A549 (cell line): ENCODE measurements at regions of chr17 and their contacts with region 1.

Region 1: DNA sequence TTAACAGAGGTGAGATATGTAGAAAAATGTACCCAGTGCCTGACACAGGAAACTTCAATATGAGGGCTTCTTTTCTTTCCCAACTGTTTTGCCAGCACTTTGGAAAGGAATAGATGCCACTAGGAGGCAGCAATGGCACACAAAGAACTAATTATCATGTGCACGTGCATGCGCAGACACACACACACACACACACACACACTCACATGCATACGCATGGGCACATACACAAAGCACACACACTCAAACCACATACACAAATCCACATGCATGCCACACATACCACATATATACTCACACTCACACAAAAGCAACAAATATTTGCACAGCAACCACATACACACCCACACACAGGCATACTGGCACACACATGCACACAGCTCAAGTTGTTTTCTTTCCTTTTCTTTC is 8.8 kb upstream of the CEP112 start:
- DNase-seq: peak; percentile 77 to 89
- ATAC-seq: peak; percentile 75 to 81
- H3K4me3 ChIP-seq: no peak overlapping the region
- H3K27ac ChIP-seq: peak overlapping the region; percentile 8 to 14; a peak in 2 of 6 replicates
- H3K4me1 ChIP-seq: peaks cover 5% of the 10 kb centered on the region
- CTCF ChIP-seq: peak; percentile 98
- EP300 ChIP-seq: no peak
- POLR2A ChIP-seq: no peak
- RAD21 ChIP-seq: peak; percentile 99

Region 2: DNA sequence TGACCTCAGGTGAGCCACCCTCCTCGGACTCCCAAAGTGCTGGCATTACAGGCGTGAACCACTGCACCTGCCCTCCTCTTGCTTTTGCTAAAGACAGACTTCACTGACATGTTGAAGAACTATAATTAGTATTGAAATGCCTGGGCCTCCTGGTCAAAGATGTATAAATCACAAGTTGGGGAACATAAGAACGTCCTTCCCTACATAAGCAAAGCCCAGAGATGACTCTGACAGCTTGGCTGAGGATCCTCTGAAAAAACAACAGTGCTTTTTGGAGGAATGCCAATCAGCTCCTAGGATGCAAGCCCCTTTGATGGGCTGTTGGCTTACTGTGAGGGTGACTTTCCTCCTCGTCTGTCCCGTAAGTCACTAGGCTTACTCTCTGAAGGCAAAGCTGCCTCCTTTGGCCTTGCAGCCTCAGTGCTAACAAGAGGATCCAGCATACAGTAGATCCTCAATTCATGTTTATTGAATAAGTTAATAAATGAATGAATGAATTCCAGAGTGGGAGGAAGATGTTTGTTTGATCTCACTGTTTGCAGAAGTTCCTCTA is 22.2 kb after region 1 on chr17:
- CTCF ChIA-PET with region 1: interaction called, 20 read pairs
- POLR2A ChIA-PET with region 1: no interaction called
- DNase-seq: no peak
- ATAC-seq: peak in 1 of 2 experiments; percentile 40; a peak in 3 of 6 replicates
- H3K4me3 ChIP-seq: no peak overlapping the region
- H3K27ac ChIP-seq: peak overlapping the region; percentile 1 to 54; a peak in 3 of 6 replicates
- H3K4me1 ChIP-seq: peaks cover 16% of the 10 kb centered on the region
- CTCF ChIP-seq: no peak
- EP300 ChIP-seq: no peak
- POLR2A ChIP-seq: no peak
- RAD21 ChIP-seq: no peak

Region 3: DNA sequence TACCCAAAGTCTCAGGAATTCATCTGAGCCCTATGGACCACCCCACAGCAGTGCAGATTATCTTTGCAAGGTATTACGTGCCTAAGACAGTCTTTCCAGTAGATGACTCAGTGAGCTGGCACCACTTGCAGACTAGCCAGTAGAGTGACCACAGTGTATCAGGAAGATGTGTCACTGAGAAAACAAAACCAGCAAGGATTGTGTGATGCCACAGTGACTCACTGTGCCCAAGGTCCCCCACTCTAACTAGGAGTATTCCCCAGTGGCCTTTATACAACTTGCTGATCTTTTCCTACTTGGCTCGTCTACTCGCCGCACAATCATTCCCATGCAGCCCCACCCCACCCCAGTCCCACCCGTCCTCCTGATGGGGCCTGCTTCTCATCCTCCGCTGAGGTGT is 75.0 kb after region 1 on chr17:
- CTCF ChIA-PET with region 1: interaction called, 10 read pairs
- POLR2A ChIA-PET with region 1: no interaction called
- DNase-seq: peak; percentile 97 to 98
- ATAC-seq: peak; percentile 94 to 97
- H3K4me3 ChIP-seq: no peak overlapping the region
- H3K27ac ChIP-seq: peak overlapping the region; percentile 91 to 92
- H3K4me1 ChIP-seq: peaks cover 59% of the 10 kb centered on the region
- CTCF ChIP-seq: peak; percentile 48
- EP300 ChIP-seq: peak; percentile 95 to 97
- POLR2A ChIP-seq: no peak
- RAD21 ChIP-seq: peak; percentile 70 to 87

Region 4: GRCh38 chr17:66567234-66568170 is 366.8 kb after region 1 on chr17:
- CTCF ChIA-PET with region 1: interaction called, 10 read pairs
- POLR2A ChIA-PET with region 1: no interaction called
- DNase-seq: peak; percentile 78 to 87
- ATAC-seq: peak; percentile 90 to 94
- H3K4me3 ChIP-seq: no peak overlapping the region
- H3K27ac ChIP-seq: peak overlapping the region; percentile 75 to 89
- H3K4me1 ChIP-seq: peaks cover 53% of the 10 kb centered on the region
- CTCF ChIP-seq: peak; percentile 97
- EP300 ChIP-seq: 0 out of 5 replicates have a peak, but pooled peaks have one; percentile 14 to 33
- POLR2A ChIP-seq: no peak
- RAD21 ChIP-seq: peak; percentile 96 to 98

Region 5: GRCh38 chr17:66673668-66674315 is 473.1 kb after region 1 on chr17:
- CTCF ChIA-PET with region 1: interaction called, 49 read pairs
- POLR2A ChIA-PET with region 1: no interaction called
- DNase-seq: peak; percentile 62 to 80
- ATAC-seq: peak; percentile 57 to 77; a peak in 5 of 6 replicates
- H3K4me3 ChIP-seq: no peak overlapping the region
- H3K27ac ChIP-seq: peak overlapping the region; percentile 63 to 72; a peak in 5 of 6 replicates
- H3K4me1 ChIP-seq: peaks cover 40% of the 10 kb centered on the region
- CTCF ChIP-seq: peak; percentile 91
- EP300 ChIP-seq: no peak
- POLR2A ChIP-seq: no peak
- RAD21 ChIP-seq: peak; percentile 97